Lower leg skin (tissue), 4 donors: ENCODE measurements at regions of chr1 and their contacts with region 1.

Region 1: GRCh38 chr1:45303582-45304310 is 22.9 kb upstream of the HPDL start:
- DNase-seq: peak; percentile 98 to 100
- H3K4me3 ChIP-seq: peak overlapping the region; percentile 64
- CTCF ChIP-seq: no peak
- POLR2A ChIP-seq: no peak

Region 2: GRCh38 chr1:44835738-44836675 is 467.7 kb before region 1 on chr1:
- intact Hi-C with region 1: loop called (anchors 10 kb)
- DNase-seq: peak; percentile 74 to 97
- H3K4me3 ChIP-seq: no peak overlapping the region
- CTCF ChIP-seq: peak in 1 of 3 donors; percentile 56
- POLR2A ChIP-seq: no peak

Region 3: GRCh38 chr1:45011837-45012638 is 291.7 kb before region 1 on chr1 and contains the start of gene UROD:
- intact Hi-C with region 1: loop called (anchors 5 kb)
- DNase-seq: peak; percentile 95 to 97
- H3K4me3 ChIP-seq: peak within 1 kb of the TSS; percentile 92
- CTCF ChIP-seq: no peak
- POLR2A ChIP-seq: no peak
- total RNA-seq, gene UROD: 26.6 to 59.0 (median 45.8) TPM

Region 4: GRCh38 chr1:45023663-45024062 is 280.1 kb before region 1 on chr1:
- intact Hi-C with region 1: loop called (anchors 5 kb)
- DNase-seq: no peak
- H3K4me3 ChIP-seq: no peak overlapping the region
- CTCF ChIP-seq: no peak
- POLR2A ChIP-seq: no peak

Region 5: GRCh38 chr1:45339789-45340570 is 36.2 kb after region 1 on chr1 and contains the starts of genes MUTYH and TOE1:
- intact Hi-C with region 1: loop called (anchors 2 kb)
- DNase-seq: peak; percentile 87 to 98
- H3K4me3 ChIP-seq: peak within 1 kb of the TSS; percentile 78
- CTCF ChIP-seq: peak in 1 of 3 donors; percentile 50
- POLR2A ChIP-seq: no peak
- total RNA-seq, gene MUTYH: 18.6 to 26.7 (median 24.6) TPM
- total RNA-seq, gene TOE1: 6.0 to 11.9 (median 9.6) TPM